Endothelial cell of umbilical vein (primary cell): ENCODE measurements at regions of chr19 and their contacts with region 1.

Region 1: GRCh38 chr19:42113641-42114348 is 18.5 kb downstream of the POU2F2 start:
- DNase-seq: peak; percentile 97
- H3K4me3 ChIP-seq: no peak overlapping the region
- H3K27ac ChIP-seq: peak overlapping the region; percentile 88
- H3K4me1 ChIP-seq: peaks cover 29% of the 10 kb centered on the region
- H3K27me3 ChIP-seq: no peaks in the 10 kb centered on the region
- CTCF ChIP-seq: peak; percentile 26 to 47
- POLR2A ChIP-seq: peak; percentile 42

Region 2: DNA sequence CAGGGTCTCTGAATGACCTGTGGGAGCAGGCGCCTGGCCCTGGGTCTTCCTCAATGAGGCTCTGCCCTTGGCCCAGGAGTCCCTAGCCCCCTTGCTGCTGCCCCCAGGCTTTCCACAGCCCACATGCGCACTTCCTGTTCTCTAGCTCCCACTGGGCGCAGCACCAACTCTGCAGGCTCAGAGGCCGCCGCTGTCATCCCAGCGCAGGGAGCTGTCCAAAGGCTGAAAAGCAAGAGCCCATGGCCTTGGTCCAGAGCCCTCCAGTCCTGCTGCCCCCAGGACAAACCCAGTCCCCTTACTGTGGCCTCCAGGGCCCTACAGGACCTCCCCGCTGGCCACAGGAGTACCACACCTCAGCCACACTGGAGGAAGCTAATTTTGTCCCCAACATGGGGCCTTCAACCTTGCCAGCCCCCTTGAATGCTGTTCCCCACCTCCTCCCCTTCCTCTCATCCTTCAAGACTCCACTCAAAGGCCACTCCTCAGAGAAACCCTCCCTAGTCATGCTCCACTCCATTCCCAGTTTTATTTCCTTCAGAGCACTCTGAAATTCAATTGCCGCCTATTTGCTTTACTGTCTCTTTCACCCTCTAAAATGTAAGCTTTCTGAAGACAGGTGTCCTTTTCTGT is 26.4 kb after region 1 on chr19:
- CTCF ChIA-PET with region 1: interaction called, 12 read pairs
- POLR2A ChIA-PET with region 1: interaction called, 11 read pairs
- dilution Hi-C with region 1: no loop called
- intact Hi-C with region 1: no loop called
- DNase-seq: peak; percentile 68
- H3K4me3 ChIP-seq: no peak overlapping the region
- H3K27ac ChIP-seq: no peak overlapping the region
- H3K4me1 ChIP-seq: no peaks in the 10 kb centered on the region
- H3K27me3 ChIP-seq: no peaks in the 10 kb centered on the region
- CTCF ChIP-seq: peak in 1 of 2 donors; percentile 3
- POLR2A ChIP-seq: no peak

Region 3: GRCh38 chr19:42154471-42155323 is 40.9 kb after region 1 on chr19:
- CTCF ChIA-PET with region 1: no interaction called
- POLR2A ChIA-PET with region 1: no interaction called
- dilution Hi-C with region 1: no loop called
- intact Hi-C with region 1: no loop called
- DNase-seq: no peak
- H3K4me3 ChIP-seq: no peak overlapping the region
- H3K27ac ChIP-seq: no peak overlapping the region
- H3K4me1 ChIP-seq: no peaks in the 10 kb centered on the region
- H3K27me3 ChIP-seq: peaks cover 19 to 27% of the 10 kb centered on the region in 2 experiments
- CTCF ChIP-seq: no peak
- POLR2A ChIP-seq: no peak